ENCODE measurements at regions of chr5 and their contacts with region 1.

Region 1: DNA sequence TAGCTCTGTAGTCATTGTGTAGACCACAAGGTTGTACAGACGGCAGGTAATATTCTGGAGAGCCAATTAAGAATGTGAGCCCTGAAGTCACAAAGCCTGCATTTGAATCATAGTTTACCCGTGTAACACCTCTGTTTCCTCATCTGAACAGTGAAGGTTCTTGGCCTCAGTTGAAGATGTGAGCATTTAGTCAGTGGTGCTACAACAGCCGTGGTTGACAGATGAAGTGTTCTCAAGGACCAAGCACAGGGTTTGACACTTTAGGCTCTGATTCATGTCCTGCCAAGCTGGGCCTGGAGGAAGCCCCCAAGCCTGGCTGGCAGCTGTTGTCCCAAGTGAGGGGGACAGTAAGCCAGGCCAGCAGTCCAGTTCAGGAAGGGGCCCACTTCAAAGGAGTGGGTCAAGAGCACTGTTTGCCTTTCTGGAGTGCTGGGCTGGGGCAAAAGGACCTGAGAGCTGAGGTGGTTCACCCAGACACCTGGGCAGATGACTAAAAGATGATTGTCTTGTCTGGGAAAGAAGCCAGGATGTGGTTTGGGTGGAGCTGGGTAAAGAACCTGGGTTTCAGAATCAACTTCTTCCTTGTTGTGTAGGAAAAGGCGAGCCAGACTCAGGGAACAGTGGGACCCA is 20.7 kb downstream of the FAXDC2 start:
- DNase-seq: no peak
- H3K4me3 ChIP-seq: no peak overlapping the region
- H3K4me3 Mint-ChIP-seq: no peak overlapping the region
- H3K27ac Mint-ChIP-seq: no peak overlapping the region
- H3K4me1 ChIP-seq: 0 out of 2 replicates have a peak, but pooled peaks cover under 1% of the 10 kb centered on the region
- H3K4me1 Mint-ChIP-seq: peaks cover 4% of the 10 kb centered on the region
- H3K27me3 ChIP-seq: no peaks in the 10 kb centered on the region
- H3K27me3 Mint-ChIP-seq: no peaks in the 10 kb centered on the region
- CTCF ChIP-seq: no peak

Region 2: GRCh38 chr5:154663424-154663823 is 166.3 kb before region 1 on chr5:
- CTCF ChIA-PET with region 1: no interaction called
- POLR2A ChIA-PET with region 1: interaction called, 18 read pairs
- intact Hi-C with region 1: no loop called
- DNase-seq: no peak
- H3K4me3 ChIP-seq: no peak overlapping the region
- H3K4me3 Mint-ChIP-seq: no peak overlapping the region
- H3K27ac Mint-ChIP-seq: no peak overlapping the region
- H3K4me1 ChIP-seq: no peaks in the 10 kb centered on the region
- H3K4me1 Mint-ChIP-seq: no peaks in the 10 kb centered on the region
- H3K27me3 ChIP-seq: no peaks in the 10 kb centered on the region
- H3K27me3 Mint-ChIP-seq: no peaks in the 10 kb centered on the region
- CTCF ChIP-seq: no peak

Region 3: GRCh38 chr5:154923441-154924430 is 94.0 kb after region 1 on chr5:
- CTCF ChIA-PET with region 1: no interaction called
- POLR2A ChIA-PET with region 1: no interaction called
- intact Hi-C with region 1: no loop called
- DNase-seq: no peak
- H3K4me3 ChIP-seq: no peak overlapping the region
- H3K4me3 Mint-ChIP-seq: no peak overlapping the region
- H3K27ac Mint-ChIP-seq: no peak overlapping the region
- H3K4me1 ChIP-seq: no peaks in the 10 kb centered on the region
- H3K4me1 Mint-ChIP-seq: no peaks in the 10 kb centered on the region
- H3K27me3 ChIP-seq: no peaks in the 10 kb centered on the region
- H3K27me3 Mint-ChIP-seq: no peaks in the 10 kb centered on the region
- CTCF ChIP-seq: no peak

Measured in Caco-2 (cell line).